ENCODE measurements at regions of chr1 and their contacts with region 1.

Region 1: DNA sequence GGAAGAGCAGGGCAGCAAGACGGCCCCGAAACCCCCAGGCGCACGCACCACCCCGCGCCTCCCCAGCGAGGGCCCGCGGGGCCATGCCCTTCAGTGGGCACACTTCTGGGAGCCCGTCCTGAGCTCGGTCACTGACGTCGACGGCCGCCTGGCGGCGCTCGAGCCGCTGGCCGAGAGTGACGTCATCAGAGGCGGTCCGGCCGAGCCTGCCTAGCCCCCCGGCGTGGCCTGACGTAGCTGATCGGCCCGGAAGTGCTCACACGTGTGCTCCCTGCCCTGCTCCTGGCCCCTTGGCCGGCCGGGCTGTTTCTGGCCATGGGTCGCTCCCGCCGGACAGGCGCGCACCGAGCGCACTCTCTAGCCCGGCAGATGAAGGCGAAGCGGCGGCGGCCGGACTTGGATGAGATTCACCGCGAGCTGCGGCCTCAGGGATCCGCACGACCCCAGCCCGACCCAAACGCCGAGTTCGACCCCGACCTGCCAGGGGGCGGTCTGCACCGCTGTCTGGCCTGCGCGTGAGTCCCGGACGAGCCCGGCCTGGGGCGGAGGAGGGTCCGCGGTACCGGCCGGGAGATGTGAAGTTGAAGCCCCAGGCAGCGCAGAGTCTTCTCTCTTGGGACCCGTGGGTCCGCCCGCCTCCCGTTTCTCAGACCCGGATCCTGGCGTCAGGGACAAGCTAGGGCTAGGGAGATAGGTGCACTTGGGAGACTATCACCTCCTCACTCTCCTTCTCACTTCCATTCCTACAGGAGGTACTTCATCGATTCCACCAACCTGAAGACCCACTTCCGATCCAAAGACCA is at the start of gene ZNF593:
- DNase-seq: peak; percentile 92
- ATAC-seq: peak; percentile 95
- H3K4me3 Mint-ChIP-seq: peak within 1 kb of the TSS; percentile 89
- H3K27ac Mint-ChIP-seq: peak within 1 kb of the TSS; percentile 89
- H3K4me1 Mint-ChIP-seq: peaks cover 25% of the 10 kb centered on the region
- H3K27me3 Mint-ChIP-seq: peaks cover 9% of the 10 kb centered on the region
- total RNA-seq, gene ZNF593: 28.4 to 31.1 TPM

Region 2: DNA sequence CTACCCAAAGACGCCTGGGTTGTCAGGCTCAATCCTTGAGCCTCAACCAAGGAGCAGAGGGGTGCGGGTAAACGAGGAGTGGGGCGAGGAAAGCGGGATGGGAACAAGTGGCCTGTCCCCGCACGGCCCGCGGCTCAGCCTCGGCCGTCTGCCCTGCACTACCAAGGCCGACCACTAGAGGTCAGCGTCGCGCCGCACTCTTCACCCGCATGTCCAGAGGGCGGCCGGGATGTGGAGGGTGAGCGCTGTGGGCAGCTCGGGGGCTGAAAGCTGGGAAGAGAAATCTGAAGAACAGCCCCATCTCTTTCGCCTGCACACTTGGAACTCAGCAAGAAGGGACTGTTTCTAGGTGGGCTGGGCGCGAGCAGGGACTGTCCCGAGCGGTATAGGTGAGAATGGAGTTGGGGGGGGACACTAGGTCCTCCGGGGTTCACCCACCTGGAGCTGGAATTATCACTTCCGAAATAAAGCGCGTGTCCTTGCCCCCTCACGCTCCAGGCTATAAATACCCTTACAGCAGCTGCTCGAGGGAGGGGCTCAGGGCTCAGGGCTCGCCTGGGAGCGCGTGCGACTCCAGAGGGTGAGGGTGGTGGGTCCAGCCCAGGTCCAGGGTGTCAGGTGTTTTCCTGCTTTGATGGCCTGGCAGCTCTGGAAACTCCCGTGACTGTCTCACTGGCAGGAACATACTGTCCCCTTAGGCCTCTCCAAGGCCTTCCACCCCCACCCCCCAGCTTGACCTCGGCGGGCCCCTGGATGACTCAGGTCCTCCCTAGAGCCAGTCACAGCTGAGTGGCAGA is 133.7 kb before region 1 on chr1:
- CTCF ChIA-PET with region 1: interaction called, 11 read pairs
- POLR2A ChIA-PET with region 1: no interaction called
- DNase-seq: peak; percentile 81
- ATAC-seq: peak; percentile 77
- H3K4me3 Mint-ChIP-seq: peak overlapping the region; percentile 91
- H3K27ac Mint-ChIP-seq: no peak overlapping the region
- H3K4me1 Mint-ChIP-seq: peaks cover 16% of the 10 kb centered on the region
- H3K27me3 Mint-ChIP-seq: peaks cover 21% of the 10 kb centered on the region

Region 3: GRCh38 chr1:26156704-26157038 is 13.2 kb before region 1 on chr1:
- CTCF ChIA-PET with region 1: interaction called, 28 read pairs
- POLR2A ChIA-PET with region 1: interaction called, 3 read pairs
- DNase-seq: no peak
- ATAC-seq: no peak
- H3K4me3 Mint-ChIP-seq: no peak overlapping the region
- H3K27ac Mint-ChIP-seq: no peak overlapping the region
- H3K4me1 Mint-ChIP-seq: peaks cover 7% of the 10 kb centered on the region
- H3K27me3 Mint-ChIP-seq: peaks cover 31% of the 10 kb centered on the region

Region 4: DNA sequence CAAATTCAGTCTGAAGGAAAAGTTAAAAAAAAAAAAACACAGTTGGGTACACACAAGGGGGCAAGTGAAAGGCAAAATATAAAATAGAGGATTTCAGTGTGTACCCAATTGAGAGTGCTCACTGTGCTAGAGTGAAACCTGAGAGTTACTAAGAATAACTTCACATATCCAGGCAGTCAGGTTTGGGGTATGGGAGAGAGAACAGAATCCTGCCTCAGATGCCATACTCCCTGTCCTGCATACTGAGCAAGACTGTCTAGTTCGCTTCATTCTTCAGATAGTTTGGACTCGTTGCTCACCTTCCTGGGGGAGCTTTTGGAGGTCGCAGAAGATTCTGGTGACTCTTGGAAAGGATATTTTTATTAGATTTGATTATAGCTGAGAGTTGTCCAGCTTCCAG is 84.5 kb after region 1 on chr1:
- CTCF ChIA-PET with region 1: no interaction called
- POLR2A ChIA-PET with region 1: no interaction called
- DNase-seq: no peak
- ATAC-seq: no peak
- H3K4me3 Mint-ChIP-seq: no peak overlapping the region
- H3K27ac Mint-ChIP-seq: no peak overlapping the region
- H3K4me1 Mint-ChIP-seq: peaks cover 5% of the 10 kb centered on the region
- H3K27me3 Mint-ChIP-seq: no peaks in the 10 kb centered on the region

Region 5: GRCh38 chr1:26265405-26265804 is 95.5 kb after region 1 on chr1:
- CTCF ChIA-PET with region 1: no interaction called
- POLR2A ChIA-PET with region 1: no interaction called
- DNase-seq: no peak
- ATAC-seq: no peak
- H3K4me3 Mint-ChIP-seq: no peak overlapping the region
- H3K27ac Mint-ChIP-seq: no peak overlapping the region
- H3K4me1 Mint-ChIP-seq: no peaks in the 10 kb centered on the region
- H3K27me3 Mint-ChIP-seq: no peaks in the 10 kb centered on the region

Measured in activated CD8-positive, alpha-beta T cell treated with anti-CD3 and anti-CD28 coated beads, Interleukin-2, amount 10 ng/mL, durations not matched to agents 7 days and 5 days (primary cell).